ENCODE measurements at regions of chr11 and their contacts with region 1.

Region 1: DNA sequence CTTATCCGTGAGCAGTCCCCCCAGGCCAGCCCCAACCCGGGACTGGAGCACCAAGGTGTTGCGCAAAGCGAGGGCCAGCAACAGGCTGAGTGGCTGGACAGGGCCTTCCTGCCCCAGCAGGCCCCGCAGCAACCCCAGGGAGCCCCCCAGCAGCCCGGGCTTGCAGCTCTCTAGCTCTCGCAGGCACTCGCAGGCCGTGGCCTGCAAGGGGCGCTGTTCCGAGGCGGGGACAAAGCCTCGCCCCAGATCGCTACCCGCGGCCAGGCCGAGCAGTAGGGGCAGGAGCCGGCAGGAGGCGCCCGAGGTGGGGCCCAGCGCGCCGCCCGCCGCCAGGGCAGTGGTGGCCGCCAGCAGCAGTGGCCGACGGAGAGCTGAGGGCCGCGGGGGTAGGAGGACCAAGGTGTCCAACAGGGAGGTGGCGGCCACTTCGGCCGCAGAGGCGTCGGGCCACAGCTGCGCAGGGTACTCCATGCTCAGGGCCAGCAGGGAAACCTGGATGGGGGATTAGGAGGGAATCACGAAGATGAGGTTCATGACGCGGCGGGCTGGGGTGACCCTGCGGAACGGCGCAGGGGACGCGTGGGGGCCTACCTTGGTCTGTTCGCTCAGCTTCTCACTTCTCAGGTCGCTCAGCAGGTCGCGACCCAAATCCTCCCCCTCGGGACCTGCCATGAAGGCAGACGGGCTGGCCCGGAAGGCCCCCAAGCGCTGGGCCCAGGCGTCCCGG is 762 bp downstream of the AP5B1 start:
- DNase-seq: peak; percentile 91
- ATAC-seq: peak; percentile 81
- H3K4me3 Mint-ChIP-seq: peak overlapping the region; percentile 87
- H3K27ac Mint-ChIP-seq: peak overlapping the region; percentile 82
- H3K4me1 Mint-ChIP-seq: peaks cover 16% of the 10 kb centered on the region
- H3K27me3 Mint-ChIP-seq: peaks cover 14% of the 10 kb centered on the region

Region 2: GRCh38 chr11:65720237-65720934 is 59.6 kb before region 1 on chr11 and contains the start of gene RNASEH2C:
- CTCF ChIA-PET with region 1: interaction called, 14 read pairs
- DNase-seq: peak; percentile 88
- ATAC-seq: peak; percentile 94
- H3K4me3 Mint-ChIP-seq: peak within 1 kb of the TSS; percentile 98
- H3K27ac Mint-ChIP-seq: peak within 1 kb of the TSS; percentile 85
- H3K4me1 Mint-ChIP-seq: peaks cover 33% of the 10 kb centered on the region
- H3K27me3 Mint-ChIP-seq: no peaks in the 10 kb centered on the region
- total RNA-seq, gene RNASEH2C: 90.5 to 109 TPM

Region 3: DNA sequence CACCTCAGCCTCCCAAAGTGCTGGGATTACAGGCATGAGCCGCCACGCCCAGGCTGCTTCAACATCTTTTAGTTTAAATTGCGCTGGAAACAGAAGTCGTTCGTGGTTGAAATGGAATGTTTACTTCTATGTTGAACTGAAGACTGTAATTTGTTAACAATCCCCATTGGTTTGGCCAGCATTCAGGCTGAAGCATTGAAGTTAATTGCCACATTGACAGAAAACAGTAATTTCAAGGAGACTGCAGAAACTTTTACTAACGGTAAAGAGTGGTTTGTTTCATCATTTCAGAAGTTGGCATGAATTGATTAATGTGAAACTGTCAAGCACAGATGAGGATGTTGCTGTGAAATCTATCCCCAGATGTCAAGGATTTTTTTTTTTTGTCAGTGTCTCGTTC is 13.5 kb before region 1 on chr11:
- CTCF ChIA-PET with region 1: interaction called, 37 read pairs
- DNase-seq: no peak
- ATAC-seq: no peak
- H3K4me3 Mint-ChIP-seq: no peak overlapping the region
- H3K27ac Mint-ChIP-seq: no peak overlapping the region
- H3K4me1 Mint-ChIP-seq: peaks cover 8% of the 10 kb centered on the region
- H3K27me3 Mint-ChIP-seq: peaks cover 3% of the 10 kb centered on the region

Region 4: DNA sequence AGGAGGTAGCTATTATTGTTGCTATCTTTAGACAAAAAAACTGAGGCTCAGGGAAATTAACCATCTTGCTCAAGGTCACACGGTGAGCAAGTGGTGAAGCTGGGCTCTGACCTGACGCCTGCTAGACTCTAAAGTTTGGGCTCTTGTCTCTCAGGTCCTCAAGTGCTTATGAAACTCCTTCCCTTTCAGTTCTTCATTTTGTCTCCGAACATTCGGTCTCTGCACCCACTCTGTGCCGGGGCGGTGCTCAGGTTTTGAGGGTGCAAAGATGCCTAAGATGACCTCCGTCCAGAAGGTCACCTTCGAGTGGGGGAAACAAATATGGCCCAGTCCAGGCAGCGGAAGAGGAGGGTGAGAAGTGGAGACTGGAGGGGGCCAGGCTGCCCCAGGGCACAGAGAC is 22.8 kb after region 1 on chr11:
- CTCF ChIA-PET with region 1: interaction called, 51 read pairs
- DNase-seq: no peak
- ATAC-seq: no peak
- H3K4me3 Mint-ChIP-seq: no peak overlapping the region
- H3K27ac Mint-ChIP-seq: no peak overlapping the region
- H3K4me1 Mint-ChIP-seq: peaks cover 6% of the 10 kb centered on the region
- H3K27me3 Mint-ChIP-seq: peaks cover 40% of the 10 kb centered on the region

Region 5: GRCh38 chr11:65833297-65834030 is 53.5 kb after region 1 on chr11 and contains the start of gene SNX32:
- CTCF ChIA-PET with region 1: interaction called, 20 read pairs
- DNase-seq: peak; percentile 97
- ATAC-seq: peak; percentile 100
- H3K4me3 Mint-ChIP-seq: no peak within 1 kb of the TSS
- H3K27ac Mint-ChIP-seq: peak within 1 kb of the TSS; percentile 31
- H3K4me1 Mint-ChIP-seq: peaks cover 15% of the 10 kb centered on the region
- H3K27me3 Mint-ChIP-seq: peaks cover 28% of the 10 kb centered on the region
- total RNA-seq, gene SNX32: 1.7 to 2.4 TPM

Region 6: DNA sequence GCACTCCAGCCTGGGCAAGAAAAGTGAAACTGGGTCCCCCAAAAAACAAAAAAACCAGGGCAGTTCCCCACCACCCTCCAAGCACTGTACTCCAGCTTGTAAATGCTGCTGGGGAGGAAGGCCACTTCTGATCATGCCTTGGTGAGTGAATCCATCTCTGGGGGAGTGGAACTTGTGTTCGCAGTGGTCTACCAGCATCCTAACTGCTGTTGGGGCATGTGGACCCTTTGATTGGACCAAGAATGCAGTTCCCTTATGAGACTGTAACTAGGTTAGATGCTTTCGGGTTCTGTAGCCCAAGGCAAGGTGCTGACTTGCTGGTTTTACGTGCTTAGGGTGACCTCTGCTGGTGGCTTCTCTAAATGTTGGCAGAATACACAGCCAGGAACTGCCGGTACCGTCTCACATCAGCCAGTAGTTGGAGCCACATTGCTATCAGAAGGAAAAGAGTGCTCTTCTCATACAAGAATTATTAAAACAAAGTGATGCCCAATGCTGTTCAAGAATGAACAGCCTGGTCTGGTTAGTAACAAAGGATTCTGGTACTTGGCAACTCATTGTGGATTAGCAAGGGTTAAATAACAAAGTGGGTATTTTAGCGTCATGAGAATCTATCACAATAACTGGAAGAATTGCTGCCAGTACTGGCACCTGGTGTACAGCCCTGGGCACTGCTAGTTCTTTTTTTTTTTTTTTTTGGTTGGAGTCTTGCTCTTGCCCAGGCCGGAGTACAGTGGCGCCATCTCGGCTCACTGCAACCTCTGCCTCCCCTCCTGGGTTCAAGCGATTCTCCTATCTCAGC is 209.0 kb after region 1 on chr11:
- CTCF ChIA-PET with region 1: interaction called, 17 read pairs
- DNase-seq: peak; percentile 96
- ATAC-seq: peak; percentile 100
- H3K4me3 Mint-ChIP-seq: no peak overlapping the region
- H3K27ac Mint-ChIP-seq: peak overlapping the region; percentile 80
- H3K4me1 Mint-ChIP-seq: peaks cover 8% of the 10 kb centered on the region
- H3K27me3 Mint-ChIP-seq: no peaks in the 10 kb centered on the region